GM18951 (cell line): ENCODE measurements at regions of chr9 and their contacts with region 1.

Region 1: DNA sequence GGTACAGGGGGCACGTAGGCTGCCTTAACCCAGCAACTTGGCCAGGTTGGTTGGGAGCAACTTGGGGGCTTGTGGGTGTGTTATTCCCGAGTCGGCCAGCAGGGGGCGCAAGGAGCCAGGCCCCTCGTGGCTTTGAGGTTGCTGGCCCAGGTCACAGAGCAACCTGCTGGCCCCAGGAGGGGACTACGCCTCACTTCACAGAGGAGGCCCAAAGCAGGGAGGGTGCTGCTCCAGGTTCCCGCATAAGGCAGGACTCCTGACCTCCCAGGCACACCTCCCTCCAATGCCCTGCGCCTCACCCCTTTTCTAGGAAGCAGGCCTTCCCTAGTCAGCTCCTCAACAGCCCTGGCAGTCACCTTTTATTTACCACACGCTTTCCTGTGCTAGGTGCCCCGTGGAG is 18.1 kb downstream of the KYAT1 start:
- POLR2A ChIP-seq: no peak

Region 2: GRCh38 chr9:128927731-128928411 is 64.2 kb after region 1 on chr9:
- in situ Hi-C with region 1: loop called (anchors 5 kb)
- POLR2A ChIP-seq: no peak

Region 3: GRCh38 chr9:128969491-128969890 is 105.8 kb after region 1 on chr9:
- in situ Hi-C with region 1: no loop called
- POLR2A ChIP-seq: no peak